T-cell (primary cell): ENCODE measurements at regions of chr1 and their contacts with region 1.

Region 1: GRCh38 chr1:23722652-23723051 is 20.6 kb upstream of the ELOA start:
- DNase-seq: no peak
- ATAC-seq: no peak
- H3K4me3 ChIP-seq: no peak overlapping the region
- H3K4me3 Mint-ChIP-seq: no peak overlapping the region
- H3K27ac ChIP-seq: no peak overlapping the region
- H3K27ac Mint-ChIP-seq: no peak overlapping the region
- H3K4me1 ChIP-seq: peaks cover 0 to 4% of the 10 kb centered on the region in 2 experiments
- H3K4me1 Mint-ChIP-seq: peaks cover 5 to 12% (median 8%) of the 10 kb centered on the region in 3 donors
- H3K27me3 ChIP-seq: no peaks in the 10 kb centered on the region
- H3K27me3 Mint-ChIP-seq: no peaks in the 10 kb centered on the region

Region 2: GRCh38 chr1:23709229-23709628 is 13.4 kb before region 1 on chr1:
- CTCF ChIA-PET with region 1: interaction called in 1 of 2 experiments, 10 read pairs
- POLR2A ChIA-PET with region 1: no interaction called
- DNase-seq: no peak
- ATAC-seq: no peak
- H3K4me3 ChIP-seq: no peak overlapping the region
- H3K4me3 Mint-ChIP-seq: no peak overlapping the region
- H3K27ac ChIP-seq: no peak overlapping the region
- H3K27ac Mint-ChIP-seq: no peak overlapping the region
- H3K4me1 ChIP-seq: no peaks in the 10 kb centered on the region
- H3K4me1 Mint-ChIP-seq: peaks cover 0 to 5% (median 5%) of the 10 kb centered on the region in 3 donors
- H3K27me3 ChIP-seq: no peaks in the 10 kb centered on the region
- H3K27me3 Mint-ChIP-seq: no peaks in the 10 kb centered on the region

Region 3: DNA sequence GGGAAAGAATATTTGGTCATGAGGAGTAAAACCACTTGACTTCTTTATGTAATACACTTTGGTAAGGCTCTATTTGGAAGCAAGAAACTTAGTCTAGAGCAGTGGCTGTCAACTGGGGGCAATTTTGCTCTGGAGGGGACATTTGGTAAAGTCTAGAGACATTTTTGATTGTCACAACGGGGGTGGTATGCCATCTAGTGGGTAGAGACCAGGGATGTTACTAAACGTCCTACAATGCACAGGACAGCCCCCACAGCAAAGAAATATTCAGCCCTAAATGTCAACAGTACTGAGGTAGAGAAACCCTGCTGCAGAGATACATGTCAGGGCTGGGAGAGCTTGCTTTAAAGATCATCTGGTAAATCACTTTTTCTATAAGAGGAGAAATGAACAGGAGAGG is 131.9 kb after region 1 on chr1:
- CTCF ChIA-PET with region 1: no interaction called
- POLR2A ChIA-PET with region 1: no interaction called
- DNase-seq: peak in 3 of 35 experiments; percentile 1 to 31 (median 2)
- ATAC-seq: no peak
- H3K4me3 ChIP-seq: no peak overlapping the region
- H3K4me3 Mint-ChIP-seq: no peak overlapping the region
- H3K27ac ChIP-seq: no peak overlapping the region
- H3K27ac Mint-ChIP-seq: no peak overlapping the region
- H3K4me1 ChIP-seq: no peaks in the 10 kb centered on the region
- H3K4me1 Mint-ChIP-seq: peaks cover 0 to 3% (median 0%) of the 10 kb centered on the region in 3 donors
- H3K27me3 ChIP-seq: no peaks in the 10 kb centered on the region
- H3K27me3 Mint-ChIP-seq: no peaks in the 10 kb centered on the region